Heart right ventricle (tissue), 16 donors: ENCODE measurements at regions of chr16 and their contacts with region 1.

Region 1: GRCh38 chr16:17467923-17468540 is 2.7 kb downstream of the XYLT1 start:
- DNase-seq: peak; percentile 44 to 71
- ATAC-seq: peak; percentile 58 to 90 (median 78)
- H3K4me3 ChIP-seq: no peak overlapping the region
- H3K27ac ChIP-seq: no peak overlapping the region
- H3K4me1 ChIP-seq: peaks cover 0 to 41% (median 16%) of the 10 kb centered on the region in 9 donors
- H3K27me3 ChIP-seq: peaks cover 0 to 52% (median 38%) of the 10 kb centered on the region in 7 donors
- CTCF ChIP-seq: peak; percentile 22 to 79 (median 65)

Region 2: DNA sequence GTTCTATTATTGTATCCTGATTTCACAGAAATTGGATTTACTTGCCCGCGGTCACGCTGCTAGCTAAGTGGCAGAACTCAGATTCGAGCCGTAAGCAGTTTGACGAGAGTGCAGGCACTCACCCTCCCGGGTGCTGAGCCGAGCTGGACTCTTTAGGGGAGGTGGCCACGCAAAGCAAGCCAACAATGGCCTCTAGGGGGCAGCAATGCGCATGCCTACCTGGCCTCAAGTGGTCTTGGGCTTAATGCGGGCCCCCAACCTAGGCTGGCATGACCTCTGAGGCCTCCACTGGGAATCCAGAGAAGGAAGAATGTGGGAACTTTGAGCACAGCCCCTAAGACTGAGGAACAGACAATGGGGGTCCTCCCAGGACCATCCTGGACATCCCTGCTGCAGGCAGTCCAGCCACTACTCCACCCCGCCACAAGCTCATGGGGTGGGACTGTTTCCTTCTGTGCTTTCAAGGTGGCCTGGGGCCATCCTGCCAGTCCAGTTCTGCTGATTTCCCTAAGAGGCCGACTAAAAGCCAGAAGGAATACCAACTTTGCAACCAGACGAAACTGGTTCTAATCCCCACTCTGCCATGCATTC is 273.7 kb before region 1 on chr16:
- intact Hi-C with region 1: loop called in 4 of 10 experiments (anchors 10 kb)
- DNase-seq: peak; percentile 6 to 45
- ATAC-seq: peak in 2 of 8 donors; percentile 51 to 52
- H3K4me3 ChIP-seq: no peak overlapping the region
- H3K27ac ChIP-seq: no peak overlapping the region
- H3K4me1 ChIP-seq: no peaks in the 10 kb centered on the region
- H3K27me3 ChIP-seq: no peaks in the 10 kb centered on the region
- CTCF ChIP-seq: peak; percentile 31 to 81 (median 61)

Region 3: GRCh38 chr16:17224879-17225281 is 243.2 kb before region 1 on chr16:
- intact Hi-C with region 1: loop called in 1 of 10 experiments (anchors 10 kb)
- DNase-seq: peak; percentile 27 to 60
- ATAC-seq: peak; percentile 83 to 95 (median 88)
- H3K4me3 ChIP-seq: no peak overlapping the region
- H3K27ac ChIP-seq: peak overlapping the region in 7 of 10 donors; percentile 5 to 65 (median 45)
- H3K4me1 ChIP-seq: peaks cover 0 to 36% (median 20%) of the 10 kb centered on the region in 9 donors
- H3K27me3 ChIP-seq: no peaks in the 10 kb centered on the region
- CTCF ChIP-seq: no peak

Region 4: GRCh38 chr16:17283016-17283415 is 185.0 kb before region 1 on chr16:
- intact Hi-C with region 1: loop called (anchors 2 to 10 kb)
- DNase-seq: no peak
- ATAC-seq: no peak
- H3K4me3 ChIP-seq: no peak overlapping the region
- H3K27ac ChIP-seq: no peak overlapping the region
- H3K4me1 ChIP-seq: peaks cover 0 to 6% (median 0%) of the 10 kb centered on the region in 9 donors
- H3K27me3 ChIP-seq: peaks cover 0 to 11% (median 0%) of the 10 kb centered on the region in 7 donors
- CTCF ChIP-seq: no peak

Region 5: GRCh38 chr16:17404941-17405689 is 62.9 kb before region 1 on chr16:
- intact Hi-C with region 1: loop called in 1 of 10 experiments (anchors 10 kb)
- DNase-seq: peak; percentile 46 to 56
- ATAC-seq: peak; percentile 64 to 85 (median 82)
- H3K4me3 ChIP-seq: no peak overlapping the region
- H3K27ac ChIP-seq: peak overlapping the region in 8 of 10 donors; percentile 12 to 67 (median 58)
- H3K4me1 ChIP-seq: peaks cover 0 to 24% (median 7%) of the 10 kb centered on the region in 9 donors
- H3K27me3 ChIP-seq: no peaks in the 10 kb centered on the region
- CTCF ChIP-seq: no peak

Region 6: DNA sequence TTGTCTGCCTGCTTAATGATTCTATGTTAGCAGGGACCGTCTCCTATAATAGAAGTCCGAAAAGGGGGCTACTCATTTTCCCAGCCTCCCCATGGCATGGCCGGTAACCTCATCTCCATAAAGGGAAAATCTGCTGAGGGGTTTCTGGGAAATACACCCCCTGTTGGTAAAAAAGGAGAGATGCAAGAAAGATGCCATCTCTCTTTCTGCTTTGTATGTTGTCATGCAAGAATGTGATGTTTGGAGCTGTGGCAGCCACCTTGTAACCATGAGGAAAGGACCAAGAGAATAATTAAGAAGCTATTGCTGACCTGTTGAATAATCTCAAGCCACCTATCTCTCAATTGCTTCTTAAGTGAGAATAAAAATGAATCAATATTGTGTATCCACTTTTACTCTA is 97.6 kb after region 1 on chr16:
- intact Hi-C with region 1: no loop called
- DNase-seq: no peak
- ATAC-seq: no peak
- H3K4me3 ChIP-seq: no peak overlapping the region
- H3K27ac ChIP-seq: no peak overlapping the region
- H3K4me1 ChIP-seq: no peaks in the 10 kb centered on the region
- H3K27me3 ChIP-seq: peaks cover 0 to 32% (median 8%) of the 10 kb centered on the region in 7 donors
- CTCF ChIP-seq: no peak

Region 7: DNA sequence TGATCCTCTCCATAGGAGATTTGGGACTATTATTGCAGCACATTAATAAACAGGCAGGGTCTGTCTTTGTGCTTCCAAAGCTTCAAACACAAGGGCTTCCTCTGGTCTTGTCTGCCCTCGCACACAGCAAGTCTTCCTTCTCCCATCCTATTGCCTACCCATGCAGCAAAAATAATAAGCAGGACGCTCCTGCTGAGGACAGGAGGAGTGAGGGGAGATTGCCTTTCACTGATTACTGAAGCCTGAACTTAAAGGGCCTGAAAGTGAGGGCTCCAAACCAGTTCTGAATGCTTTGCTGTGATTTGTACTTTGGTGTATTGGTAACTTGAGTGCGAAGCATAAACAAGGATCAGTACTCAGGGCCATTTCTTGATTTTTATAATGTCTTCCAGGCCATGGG is 200.4 kb after region 1 on chr16:
- intact Hi-C with region 1: no loop called
- DNase-seq: no peak
- ATAC-seq: no peak
- H3K4me3 ChIP-seq: no peak overlapping the region
- H3K27ac ChIP-seq: no peak overlapping the region
- H3K4me1 ChIP-seq: no peaks in the 10 kb centered on the region
- H3K27me3 ChIP-seq: peaks cover 0 to 7% (median 0%) of the 10 kb centered on the region in 7 donors
- CTCF ChIP-seq: no peak